Activated CD4-positive, alpha-beta memory T cell treated with anti-CD3 and anti-CD28 coated beads for 36 hours (primary cell): ENCODE measurements at regions of chr4 and their contacts with region 1.

Region 1: DNA sequence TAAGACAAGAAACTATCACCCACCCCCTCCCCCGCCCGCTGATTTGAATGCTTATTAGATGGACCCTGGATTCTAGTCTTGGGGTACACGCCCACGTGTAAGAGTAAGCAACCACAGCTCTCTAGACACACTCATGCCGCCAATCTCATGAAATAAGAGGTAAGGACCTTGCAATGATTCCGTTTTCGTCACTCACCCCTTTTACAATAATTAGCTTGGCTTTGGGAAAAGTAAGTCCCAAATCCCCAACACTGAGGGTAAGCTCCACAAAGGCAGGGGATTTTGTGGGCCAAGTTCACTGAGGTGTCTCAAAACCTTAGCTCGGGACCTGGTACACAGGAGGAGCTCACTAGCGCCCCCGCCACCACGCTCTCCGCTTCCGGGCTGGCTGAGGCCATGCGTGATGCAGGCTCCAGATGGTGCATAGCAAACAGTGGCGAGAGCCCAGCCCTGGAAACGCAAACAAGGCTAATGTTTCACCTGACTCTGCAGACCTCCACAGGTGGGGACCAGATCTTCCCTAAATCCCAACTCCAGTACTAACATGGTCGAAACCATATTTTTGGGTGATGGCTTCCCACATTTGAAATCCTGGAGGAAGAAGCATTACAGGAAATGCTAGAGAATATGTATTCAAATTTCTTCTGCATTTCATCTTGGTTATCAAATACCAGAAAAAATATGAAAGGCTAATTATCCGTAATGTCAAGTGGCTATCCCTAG is 4.1 kb downstream of the PLAC8 start:
- DNase-seq: peak; percentile 94
- H3K4me3 Mint-ChIP-seq: peak overlapping the region; percentile 92
- H3K27ac Mint-ChIP-seq: peak overlapping the region; percentile 98
- H3K4me1 Mint-ChIP-seq: peaks cover 46% of the 10 kb centered on the region
- H3K27me3 Mint-ChIP-seq: no peaks in the 10 kb centered on the region

Region 2: GRCh38 chr4:82428969-82429727 is 681.2 kb before region 1 on chr4:
- CTCF ChIA-PET with region 1: no interaction called
- POLR2A ChIA-PET with region 1: no interaction called
- intact Hi-C with region 1: loop called (anchors 5 kb)
- DNase-seq: peak; percentile 95
- H3K4me3 Mint-ChIP-seq: peak overlapping the region; percentile 99
- H3K27ac Mint-ChIP-seq: peak overlapping the region; percentile 97
- H3K4me1 Mint-ChIP-seq: peaks cover 60% of the 10 kb centered on the region
- H3K27me3 Mint-ChIP-seq: no peaks in the 10 kb centered on the region

Region 3: DNA sequence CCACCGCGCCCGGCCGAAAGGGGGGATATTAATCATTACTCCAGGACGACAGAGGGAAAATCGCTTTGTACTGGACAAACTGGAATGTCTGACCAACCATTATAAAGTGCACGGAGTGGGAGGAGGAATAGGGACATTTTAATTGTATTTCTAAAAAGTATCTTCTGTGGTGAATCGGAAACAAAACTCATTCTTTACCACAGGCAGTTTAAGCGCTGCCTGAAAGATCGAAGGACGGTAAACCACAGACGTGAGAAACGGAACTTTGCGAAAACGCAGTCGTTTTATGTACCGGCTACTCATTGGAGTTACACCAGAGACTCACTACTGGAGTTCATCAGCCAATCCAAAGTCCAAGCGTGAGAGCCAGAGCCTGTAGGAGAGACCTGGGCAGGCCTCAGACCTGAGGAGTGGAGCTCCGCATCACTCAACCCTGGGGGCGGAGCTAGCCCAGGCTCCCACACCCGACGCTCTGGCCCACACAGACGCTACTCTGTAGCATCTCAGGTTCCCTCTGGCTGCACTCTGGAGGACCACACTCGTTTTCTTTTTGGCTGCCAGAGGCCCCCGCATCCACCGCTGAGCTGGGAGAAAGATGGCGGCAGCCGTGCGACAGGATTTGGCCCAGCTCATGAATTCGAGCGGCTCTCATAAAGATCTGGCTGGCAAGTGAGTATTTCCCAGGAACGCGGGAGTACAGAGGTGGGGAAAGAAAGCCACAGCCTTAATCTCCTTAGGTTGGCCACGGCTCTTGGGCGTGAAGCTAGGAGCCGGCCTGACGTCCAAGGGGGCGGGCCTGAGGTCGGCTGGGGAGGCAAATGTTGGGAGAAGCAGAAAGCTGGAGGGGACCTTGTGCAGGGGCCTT is 75.5 kb before region 1 on chr4 and contains the start of gene COPS4:
- CTCF ChIA-PET with region 1: interaction called, 17 read pairs
- POLR2A ChIA-PET with region 1: interaction called, 7 read pairs
- intact Hi-C with region 1: loop called (anchors 1 kb)
- DNase-seq: peak; percentile 97
- H3K4me3 Mint-ChIP-seq: peak within 1 kb of the TSS; percentile 85
- H3K27ac Mint-ChIP-seq: peak within 1 kb of the TSS; percentile 98
- H3K4me1 Mint-ChIP-seq: peaks cover 28% of the 10 kb centered on the region
- H3K27me3 Mint-ChIP-seq: no peaks in the 10 kb centered on the region
- total RNA-seq, gene COPS4: 38.5 to 40.6 TPM

Region 4: GRCh38 chr4:83097018-83097417 is 13.4 kb before region 1 on chr4:
- CTCF ChIA-PET with region 1: interaction called, 12 read pairs
- POLR2A ChIA-PET with region 1: interaction called, 3 read pairs
- intact Hi-C with region 1: no loop called
- DNase-seq: no peak
- H3K4me3 Mint-ChIP-seq: no peak overlapping the region
- H3K27ac Mint-ChIP-seq: no peak overlapping the region
- H3K4me1 Mint-ChIP-seq: peaks cover 51% of the 10 kb centered on the region
- H3K27me3 Mint-ChIP-seq: no peaks in the 10 kb centered on the region

Region 5: GRCh38 chr4:83201761-83202160 is 91.4 kb after region 1 on chr4:
- CTCF ChIA-PET with region 1: no interaction called
- POLR2A ChIA-PET with region 1: no interaction called
- intact Hi-C with region 1: no loop called
- DNase-seq: no peak
- H3K4me3 Mint-ChIP-seq: no peak overlapping the region
- H3K27ac Mint-ChIP-seq: no peak overlapping the region
- H3K4me1 Mint-ChIP-seq: no peaks in the 10 kb centered on the region
- H3K27me3 Mint-ChIP-seq: no peaks in the 10 kb centered on the region

Region 6: DNA sequence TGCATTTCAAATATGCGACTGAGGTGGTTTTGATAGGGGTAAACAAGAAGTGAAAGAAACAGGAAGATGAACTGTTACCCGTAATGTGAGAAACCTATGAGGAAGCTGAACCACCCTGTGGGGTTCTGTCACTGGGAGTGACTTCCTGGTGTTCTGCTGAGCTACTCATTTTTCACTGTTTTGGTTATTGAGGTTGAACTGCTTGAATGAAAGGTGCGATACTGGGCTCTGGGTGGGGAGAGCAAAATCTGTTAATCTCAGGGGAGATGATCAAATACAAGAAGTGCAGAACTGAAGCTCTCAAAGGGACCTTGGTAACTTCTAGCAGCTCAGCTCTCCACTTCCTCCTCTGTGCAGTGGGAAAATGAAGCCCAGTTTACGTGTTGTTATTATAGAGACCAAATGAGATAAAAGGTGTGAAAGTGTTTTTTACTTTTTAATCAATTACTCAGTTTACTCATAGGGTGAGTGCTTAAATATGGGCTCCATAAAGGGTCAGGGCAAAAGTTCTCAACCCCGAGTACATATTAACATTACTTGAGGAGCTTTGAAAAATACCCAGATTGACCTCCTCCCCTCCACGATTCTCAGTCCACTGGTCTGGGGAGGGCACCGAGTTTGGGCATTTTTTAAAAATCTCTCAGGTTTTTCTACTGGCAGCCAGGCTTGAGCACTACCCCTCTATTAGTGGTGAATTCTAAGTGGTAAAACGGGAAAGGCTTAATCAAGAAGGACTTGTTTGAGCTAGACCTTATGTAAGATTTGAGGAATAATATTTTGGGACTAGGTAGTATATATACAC is 107.5 kb after region 1 on chr4:
- CTCF ChIA-PET with region 1: interaction called, 9 read pairs
- POLR2A ChIA-PET with region 1: interaction called, 5 read pairs
- intact Hi-C with region 1: loop called (anchors 1 kb)
- DNase-seq: peak; percentile 76
- H3K4me3 Mint-ChIP-seq: peak overlapping the region; percentile 22
- H3K27ac Mint-ChIP-seq: peak overlapping the region; percentile 52
- H3K4me1 Mint-ChIP-seq: peaks cover 60% of the 10 kb centered on the region
- H3K27me3 Mint-ChIP-seq: peaks cover 5% of the 10 kb centered on the region

Region 7: DNA sequence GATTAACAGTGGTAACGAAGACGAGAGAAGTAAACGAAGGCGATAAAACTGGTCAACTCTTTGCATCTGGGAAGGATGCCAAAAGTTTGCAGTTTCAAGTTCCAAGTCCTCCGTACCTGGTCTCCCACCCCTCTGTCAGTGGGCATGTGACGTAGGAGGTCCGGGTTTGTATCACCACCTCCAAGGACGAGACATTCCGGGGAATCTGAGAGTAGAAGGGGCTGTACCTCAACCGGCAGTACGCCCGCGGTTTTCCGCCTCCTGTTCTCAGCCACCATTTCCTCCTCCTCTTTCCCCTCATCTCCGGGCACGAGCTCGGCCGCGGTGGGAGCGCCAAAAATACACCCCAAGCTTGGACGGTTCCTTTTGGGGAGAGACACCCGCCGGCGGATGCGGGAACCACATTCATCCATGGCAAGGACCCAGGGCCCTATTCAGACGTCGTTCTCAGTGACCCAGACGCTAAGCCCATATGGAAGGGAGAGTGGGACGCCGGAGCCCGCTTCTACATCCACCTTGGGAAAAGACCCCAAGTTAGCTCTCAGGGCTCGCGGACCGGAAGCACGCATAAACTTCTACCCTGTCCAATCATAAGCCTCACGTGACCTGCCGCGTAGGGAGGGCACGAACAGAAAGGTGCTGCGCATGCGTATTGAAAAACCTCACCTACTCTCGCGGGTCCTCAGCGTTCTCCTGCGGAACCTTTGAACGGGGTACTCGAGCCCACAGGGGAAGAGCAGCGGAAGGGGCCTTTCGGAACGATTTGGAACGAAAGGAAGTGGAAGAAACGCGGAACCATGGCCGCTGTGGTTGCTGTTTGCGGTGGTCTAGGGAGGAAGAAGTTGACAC is 345.1 kb after region 1 on chr4 and contains the starts of genes HELQ and MRPS18C:
- CTCF ChIA-PET with region 1: interaction called, 3 read pairs
- POLR2A ChIA-PET with region 1: no interaction called
- intact Hi-C with region 1: loop called (anchors 2 kb)
- DNase-seq: peak; percentile 98
- H3K4me3 Mint-ChIP-seq: peak within 1 kb of the TSS; percentile 100
- H3K27ac Mint-ChIP-seq: peak within 1 kb of the TSS; percentile 100
- H3K4me1 Mint-ChIP-seq: peaks cover 44% of the 10 kb centered on the region
- H3K27me3 Mint-ChIP-seq: peaks cover 2% of the 10 kb centered on the region
- total RNA-seq, gene HELQ: 9.5 to 13.3 TPM
- total RNA-seq, gene MRPS18C: 63.3 to 72.8 TPM

Region 8: GRCh38 chr4:83716874-83717273 is 606.5 kb after region 1 on chr4:
- CTCF ChIA-PET with region 1: no interaction called
- POLR2A ChIA-PET with region 1: no interaction called
- intact Hi-C with region 1: no loop called
- DNase-seq: no peak
- H3K4me3 Mint-ChIP-seq: no peak overlapping the region
- H3K27ac Mint-ChIP-seq: no peak overlapping the region
- H3K4me1 Mint-ChIP-seq: no peaks in the 10 kb centered on the region
- H3K27me3 Mint-ChIP-seq: peaks cover 5% of the 10 kb centered on the region